Activated naive CD4-positive, alpha-beta T cell treated with anti-CD3 and anti-CD28 coated beads for 36 hours (primary cell): ENCODE measurements at regions of chr12 and their contacts with region 1.

Region 1: DNA sequence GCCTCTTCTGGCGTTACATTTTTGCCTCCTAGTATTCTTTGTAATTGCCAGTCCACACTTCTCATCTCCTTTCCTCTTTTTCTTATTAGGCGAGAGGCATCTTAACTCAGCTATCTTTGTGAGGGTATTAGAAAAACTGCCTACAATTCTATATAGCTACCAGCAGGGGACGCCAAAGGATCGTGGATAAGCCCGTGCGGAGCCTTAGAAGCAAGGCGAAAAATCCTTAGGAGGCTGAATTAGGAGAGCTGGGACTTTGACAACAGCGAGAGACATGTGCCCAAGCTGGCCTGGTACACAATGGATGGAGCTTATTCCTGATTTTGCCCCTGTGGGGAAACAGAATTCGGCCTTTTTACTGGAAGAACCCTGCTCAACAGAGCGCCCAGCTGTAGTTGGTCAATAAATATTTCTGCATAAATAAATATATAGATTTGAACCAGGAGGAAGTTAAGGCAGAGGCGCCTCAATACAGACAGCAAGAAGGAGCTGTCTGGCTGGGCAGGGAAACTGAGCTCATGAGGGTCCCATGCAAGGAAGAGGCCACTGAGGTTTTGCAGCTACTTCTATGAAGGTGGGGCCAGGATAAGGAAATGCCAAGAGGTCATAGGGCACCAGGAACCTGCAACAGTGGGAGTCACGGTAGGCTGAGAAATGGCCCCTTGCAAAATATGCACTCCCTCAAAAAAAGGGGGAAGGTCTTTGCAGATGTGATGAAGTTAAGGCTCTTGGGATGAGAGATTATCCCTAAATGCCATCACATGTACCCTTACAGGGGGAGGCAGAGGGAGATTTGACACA is 14.6 kb upstream of the RBM19 start:
- DNase-seq: peak; percentile 46
- H3K4me3 Mint-ChIP-seq: no peak overlapping the region
- H3K27ac Mint-ChIP-seq: no peak overlapping the region
- H3K4me1 Mint-ChIP-seq: no peaks in the 10 kb centered on the region
- H3K27me3 Mint-ChIP-seq: peaks cover 27% of the 10 kb centered on the region

Region 2: GRCh38 chr12:113700943-113701342 is 279.8 kb before region 1 on chr12:
- CTCF ChIA-PET with region 1: no interaction called
- intact Hi-C with region 1: no loop called
- DNase-seq: no peak
- H3K4me3 Mint-ChIP-seq: no peak overlapping the region
- H3K27ac Mint-ChIP-seq: no peak overlapping the region
- H3K4me1 Mint-ChIP-seq: no peaks in the 10 kb centered on the region
- H3K27me3 Mint-ChIP-seq: peaks cover 18% of the 10 kb centered on the region

Region 3: DNA sequence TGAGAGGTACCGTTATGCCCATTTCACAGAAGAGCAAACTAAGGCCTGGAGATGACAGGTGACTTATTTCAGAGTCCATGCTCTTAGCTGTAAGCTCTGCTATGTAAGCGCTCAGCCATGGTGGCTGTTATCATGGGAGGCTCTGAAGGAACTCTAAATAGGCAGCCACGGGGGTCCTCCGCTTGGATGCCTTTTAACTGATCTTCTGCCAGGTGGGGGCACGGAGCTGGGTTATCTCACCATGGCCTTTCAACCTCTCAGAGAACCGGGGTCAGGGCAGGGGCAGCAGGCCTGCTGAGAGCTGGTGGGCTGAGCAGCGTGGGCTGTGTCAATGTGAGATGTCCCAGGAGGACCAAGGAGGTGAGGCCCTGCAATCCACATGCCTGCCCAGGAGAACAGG is 35.1 kb after region 1 on chr12:
- CTCF ChIA-PET with region 1: interaction called, 10 read pairs
- intact Hi-C with region 1: no loop called
- DNase-seq: no peak
- H3K4me3 Mint-ChIP-seq: no peak overlapping the region
- H3K27ac Mint-ChIP-seq: no peak overlapping the region
- H3K4me1 Mint-ChIP-seq: no peaks in the 10 kb centered on the region
- H3K27me3 Mint-ChIP-seq: peaks cover 18% of the 10 kb centered on the region

Region 4: DNA sequence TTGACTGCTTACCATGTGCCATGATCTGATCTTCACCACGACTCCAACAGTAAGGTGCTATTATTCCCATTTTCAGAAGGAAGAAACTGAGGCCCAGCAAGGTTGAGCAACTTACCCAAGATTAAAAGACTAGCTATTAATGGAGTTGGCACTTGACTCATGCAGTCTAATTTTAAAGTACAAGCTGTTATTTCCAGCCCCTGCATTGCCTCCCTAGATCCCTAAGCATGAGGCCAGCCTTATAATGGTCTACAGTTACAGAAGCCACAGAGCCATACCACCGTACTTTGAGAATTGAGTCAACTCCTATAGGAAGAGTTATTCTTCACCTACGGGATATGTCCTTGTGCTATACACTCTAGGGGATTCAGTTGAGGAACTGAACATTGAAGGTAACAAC is 52.1 kb after region 1 on chr12:
- CTCF ChIA-PET with region 1: no interaction called
- intact Hi-C with region 1: no loop called
- DNase-seq: no peak
- H3K4me3 Mint-ChIP-seq: no peak overlapping the region
- H3K27ac Mint-ChIP-seq: no peak overlapping the region
- H3K4me1 Mint-ChIP-seq: no peaks in the 10 kb centered on the region
- H3K27me3 Mint-ChIP-seq: peaks cover 19% of the 10 kb centered on the region

Region 5: DNA sequence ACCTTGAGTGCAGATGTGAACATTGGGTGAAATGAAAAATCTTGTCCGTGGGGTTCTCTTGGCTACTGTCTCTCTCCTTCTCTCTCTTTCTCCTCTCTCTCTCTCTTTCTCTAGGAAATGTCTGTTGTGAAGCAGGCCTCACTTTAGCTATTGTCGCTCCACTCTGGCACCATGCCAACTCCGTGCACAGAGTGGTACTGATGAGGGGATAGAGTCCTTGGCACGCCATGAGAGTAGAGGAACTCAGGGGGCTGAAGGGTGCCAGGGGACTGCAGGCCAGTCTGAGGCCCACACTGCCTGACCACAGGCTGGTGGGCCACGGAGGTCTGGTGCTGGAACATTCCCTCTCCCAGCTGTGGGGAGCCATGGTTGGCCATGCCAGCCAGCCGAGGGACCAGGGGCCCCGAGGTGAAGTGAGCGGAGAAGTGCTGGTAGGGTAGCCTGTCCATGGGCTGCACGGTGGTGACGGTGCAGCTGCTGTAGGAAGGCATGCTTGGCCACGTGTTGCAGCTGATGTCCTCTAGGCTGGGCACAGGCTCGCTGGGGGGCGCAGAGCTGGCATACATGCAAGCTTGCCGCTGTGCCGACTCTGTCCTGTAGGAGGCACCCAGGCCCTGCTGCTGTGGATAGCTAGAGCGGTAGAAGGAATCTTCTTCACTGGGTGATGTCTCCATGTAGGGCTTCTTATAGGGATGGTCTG is 374.8 kb after region 1 on chr12:
- CTCF ChIA-PET with region 1: no interaction called
- intact Hi-C with region 1: no loop called
- DNase-seq: no peak
- H3K4me3 Mint-ChIP-seq: no peak overlapping the region
- H3K27ac Mint-ChIP-seq: no peak overlapping the region
- H3K4me1 Mint-ChIP-seq: no peaks in the 10 kb centered on the region
- H3K27me3 Mint-ChIP-seq: peaks cover 12% of the 10 kb centered on the region

Region 6: GRCh38 chr12:115752913-115753726 is 1772.4 kb after region 1 on chr12:
- CTCF ChIA-PET with region 1: no interaction called
- intact Hi-C with region 1: loop called (anchors 5 kb)
- DNase-seq: peak; percentile 5
- H3K4me3 Mint-ChIP-seq: no peak overlapping the region
- H3K27ac Mint-ChIP-seq: no peak overlapping the region
- H3K4me1 Mint-ChIP-seq: no peaks in the 10 kb centered on the region
- H3K27me3 Mint-ChIP-seq: peaks cover 13% of the 10 kb centered on the region

Region 7: GRCh38 chr12:115916910-115917668 is 1936.4 kb after region 1 on chr12:
- CTCF ChIA-PET with region 1: interaction called, 8 read pairs
- intact Hi-C with region 1: loop called (anchors 5 kb)
- DNase-seq: peak; percentile 78
- H3K4me3 Mint-ChIP-seq: no peak overlapping the region
- H3K27ac Mint-ChIP-seq: no peak overlapping the region
- H3K4me1 Mint-ChIP-seq: no peaks in the 10 kb centered on the region
- H3K27me3 Mint-ChIP-seq: peaks cover 32% of the 10 kb centered on the region